PC-9 (cell line): ENCODE measurements at regions of chr6 and their contacts with region 1.

Region 1: DNA sequence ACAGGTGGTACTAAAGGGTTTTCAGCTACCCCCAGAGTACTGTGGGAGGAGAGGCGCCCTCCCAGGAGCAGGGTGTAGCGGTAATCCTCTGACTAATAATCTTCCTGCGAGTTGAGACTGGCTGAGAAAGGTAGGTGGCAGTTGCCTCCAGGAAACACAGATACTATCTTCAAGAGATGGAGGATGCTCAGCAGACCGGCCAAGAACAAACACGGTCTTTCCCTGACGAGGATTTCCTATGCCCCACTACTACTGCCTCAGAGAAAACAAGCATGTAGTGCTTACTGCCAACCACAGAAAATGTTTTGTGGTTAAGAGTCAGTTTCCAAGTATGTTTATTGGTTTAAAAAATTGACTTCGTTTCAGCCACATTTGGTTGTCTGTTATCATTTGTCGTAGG is 26.8 kb downstream of the C6orf89 start:
- DNase-seq: peak; percentile 37 to 89
- H3K4me3 ChIP-seq: no peak overlapping the region
- H3K27ac ChIP-seq: no peak overlapping the region
- H3K4me1 ChIP-seq: peaks cover 33% of the 10 kb centered on the region
- H3K27me3 ChIP-seq: no peaks in the 10 kb centered on the region
- CTCF ChIP-seq: no peak

Region 2: GRCh38 chr6:36836111-36837021 is 76.2 kb before region 1 on chr6:
- CTCF ChIA-PET with region 1: interaction called, 3 read pairs
- POLR2A ChIA-PET with region 1: interaction called, 12 read pairs
- intact Hi-C with region 1: no loop called
- DNase-seq: no peak
- H3K4me3 ChIP-seq: no peak overlapping the region
- H3K27ac ChIP-seq: no peak overlapping the region
- H3K4me1 ChIP-seq: no peaks in the 10 kb centered on the region
- H3K27me3 ChIP-seq: peaks cover 14% of the 10 kb centered on the region
- CTCF ChIP-seq: no peak

Region 3: DNA sequence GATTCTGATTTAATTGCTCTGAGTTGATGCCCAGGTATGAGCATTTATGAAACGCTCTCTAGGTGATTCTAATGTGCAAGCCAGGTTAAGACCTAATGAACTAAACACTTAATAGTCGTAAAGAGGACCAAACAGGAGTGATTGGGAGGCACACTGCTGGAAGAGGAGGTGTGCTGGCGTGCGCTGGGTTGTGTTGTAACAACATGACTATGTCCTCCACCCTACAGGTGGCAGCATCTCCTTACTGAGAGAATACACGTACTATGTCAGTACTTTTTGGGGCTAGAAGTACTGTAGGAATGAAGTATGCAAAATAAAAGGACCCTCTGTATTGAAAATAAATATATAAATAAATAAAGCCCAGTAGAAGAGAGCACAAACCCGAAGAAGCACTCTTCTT is 15.0 kb before region 1 on chr6:
- CTCF ChIA-PET with region 1: interaction called, 10 read pairs
- POLR2A ChIA-PET with region 1: no interaction called
- intact Hi-C with region 1: no loop called
- DNase-seq: no peak
- H3K4me3 ChIP-seq: no peak overlapping the region
- H3K27ac ChIP-seq: no peak overlapping the region
- H3K4me1 ChIP-seq: no peaks in the 10 kb centered on the region
- H3K27me3 ChIP-seq: no peaks in the 10 kb centered on the region
- CTCF ChIP-seq: peak; percentile 55

Region 4: GRCh38 chr6:36947570-36948351 is 35.2 kb after region 1 on chr6:
- CTCF ChIA-PET with region 1: interaction called, 13 read pairs
- POLR2A ChIA-PET with region 1: no interaction called
- intact Hi-C with region 1: no loop called
- DNase-seq: no peak
- H3K4me3 ChIP-seq: no peak overlapping the region
- H3K27ac ChIP-seq: no peak overlapping the region
- H3K4me1 ChIP-seq: peaks cover 35% of the 10 kb centered on the region
- H3K27me3 ChIP-seq: no peaks in the 10 kb centered on the region
- CTCF ChIP-seq: no peak

Region 5: GRCh38 chr6:36962874-36963273 is 50.3 kb after region 1 on chr6:
- CTCF ChIA-PET with region 1: no interaction called
- POLR2A ChIA-PET with region 1: no interaction called
- intact Hi-C with region 1: loop called (anchors 5 kb)
- DNase-seq: peak in 1 of 2 experiments; percentile 50
- H3K4me3 ChIP-seq: no peak overlapping the region
- H3K27ac ChIP-seq: no peak overlapping the region
- H3K4me1 ChIP-seq: peaks cover 17% of the 10 kb centered on the region
- H3K27me3 ChIP-seq: no peaks in the 10 kb centered on the region
- CTCF ChIP-seq: no peak

Region 6: DNA sequence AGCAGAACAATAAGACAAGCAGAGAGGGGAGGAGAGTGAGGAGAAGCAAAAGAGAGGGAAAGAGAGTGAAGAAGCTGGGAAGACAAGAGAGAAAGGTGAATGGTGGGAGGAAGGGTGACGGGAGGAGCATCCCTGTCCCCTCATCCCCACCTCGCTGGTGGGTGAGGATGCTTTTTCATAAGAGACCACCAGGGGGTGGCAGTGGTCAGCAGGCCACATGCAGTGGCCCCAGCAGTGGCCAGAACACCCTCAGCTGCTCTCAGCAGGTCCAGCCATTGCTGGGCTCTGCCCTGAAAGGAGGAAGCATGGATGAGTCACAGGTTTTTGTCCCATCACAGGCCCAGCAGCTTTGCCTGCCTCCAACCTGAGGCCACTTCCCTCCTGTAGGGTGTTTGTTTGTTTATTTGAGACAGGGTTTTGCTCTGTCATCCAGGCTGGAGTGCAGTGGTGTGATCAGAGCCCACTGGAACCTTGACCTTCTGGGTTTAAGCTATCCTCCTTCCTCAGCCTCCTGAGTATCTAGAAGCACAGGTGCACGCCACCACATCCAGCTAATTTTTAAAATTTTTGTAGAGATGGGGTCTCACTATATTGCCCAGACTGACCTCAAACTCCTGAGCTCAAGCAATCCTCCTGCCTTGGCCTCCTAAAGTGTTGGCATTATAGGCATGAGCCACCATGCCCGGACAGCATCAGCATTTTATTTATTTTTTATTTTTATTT is 116.8 kb after region 1 on chr6:
- CTCF ChIA-PET with region 1: no interaction called
- POLR2A ChIA-PET with region 1: interaction called, 19 read pairs
- intact Hi-C with region 1: no loop called
- DNase-seq: peak; percentile 84 to 96
- H3K4me3 ChIP-seq: no peak overlapping the region
- H3K27ac ChIP-seq: peak overlapping the region; percentile 81
- H3K4me1 ChIP-seq: peaks cover 25% of the 10 kb centered on the region
- H3K27me3 ChIP-seq: no peaks in the 10 kb centered on the region
- CTCF ChIP-seq: peak; percentile 83

Region 7: GRCh38 chr6:37207903-37208456 is 295.4 kb after region 1 on chr6:
- CTCF ChIA-PET with region 1: no interaction called
- POLR2A ChIA-PET with region 1: no interaction called
- intact Hi-C with region 1: loop called (anchors 10 kb)
- DNase-seq: peak; percentile 68 to 84
- H3K4me3 ChIP-seq: no peak overlapping the region
- H3K27ac ChIP-seq: no peak overlapping the region
- H3K4me1 ChIP-seq: peaks cover 33% of the 10 kb centered on the region
- H3K27me3 ChIP-seq: no peaks in the 10 kb centered on the region
- CTCF ChIP-seq: peak; percentile 91